Activated CD4-positive, alpha-beta T cell treated with anti-CD3 and anti-CD28 coated beads for 36 hours (primary cell): ENCODE measurements at regions of chr10 and their contacts with region 1.

Region 1: DNA sequence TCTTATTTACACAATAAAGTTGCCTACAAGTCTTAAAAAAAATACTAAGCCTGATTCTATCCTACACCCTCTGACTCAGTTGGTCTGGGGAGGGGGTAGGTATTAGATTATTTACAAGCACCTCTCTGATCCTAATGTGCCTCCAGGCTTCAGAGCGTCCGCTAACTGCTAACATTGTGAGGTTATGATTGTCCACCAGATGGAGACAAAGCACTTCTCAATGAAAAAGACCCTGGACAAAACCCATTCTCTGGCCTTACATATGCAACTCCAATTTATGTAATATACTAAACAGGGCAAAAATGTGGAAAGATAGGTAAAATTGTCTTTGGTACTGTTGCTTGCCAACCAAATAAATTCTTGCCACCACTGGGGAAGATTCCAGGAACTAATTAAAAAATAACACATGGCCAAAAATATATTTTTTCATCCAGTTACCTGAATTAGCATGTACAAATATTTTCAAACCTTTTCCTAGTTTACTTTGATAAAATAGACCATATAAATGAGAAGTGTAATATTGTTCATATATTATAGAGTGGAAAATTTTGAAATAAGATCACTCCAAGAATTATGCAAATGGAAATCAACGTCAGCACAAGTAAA is 92.4 kb downstream of the KIF20B start:
- DNase-seq: peak; percentile 46
- ATAC-seq: peak; percentile 65
- H3K4me3 Mint-ChIP-seq: no peak overlapping the region
- H3K27ac Mint-ChIP-seq: no peak overlapping the region
- H3K4me1 Mint-ChIP-seq: peaks cover 8% of the 10 kb centered on the region
- H3K27me3 Mint-ChIP-seq: peaks cover 22% of the 10 kb centered on the region

Region 2: GRCh38 chr10:89553064-89553734 is 240.6 kb before region 1 on chr10:
- CTCF ChIA-PET with region 1: no interaction called
- POLR2A ChIA-PET with region 1: no interaction called
- intact Hi-C with region 1: no loop called
- DNase-seq: no peak
- ATAC-seq: no peak
- H3K4me3 Mint-ChIP-seq: no peak overlapping the region
- H3K27ac Mint-ChIP-seq: no peak overlapping the region
- H3K4me1 Mint-ChIP-seq: no peaks in the 10 kb centered on the region
- H3K27me3 Mint-ChIP-seq: peaks cover 4% of the 10 kb centered on the region

Region 3: GRCh38 chr10:89954787-89955566 is 161.2 kb after region 1 on chr10:
- CTCF ChIA-PET with region 1: no interaction called
- POLR2A ChIA-PET with region 1: no interaction called
- intact Hi-C with region 1: loop called (anchors 2 to 10 kb)
- DNase-seq: peak; percentile 6
- ATAC-seq: peak; percentile 47
- H3K4me3 Mint-ChIP-seq: no peak overlapping the region
- H3K27ac Mint-ChIP-seq: no peak overlapping the region
- H3K4me1 Mint-ChIP-seq: peaks cover 2% of the 10 kb centered on the region
- H3K27me3 Mint-ChIP-seq: peaks cover 5% of the 10 kb centered on the region

Region 4: DNA sequence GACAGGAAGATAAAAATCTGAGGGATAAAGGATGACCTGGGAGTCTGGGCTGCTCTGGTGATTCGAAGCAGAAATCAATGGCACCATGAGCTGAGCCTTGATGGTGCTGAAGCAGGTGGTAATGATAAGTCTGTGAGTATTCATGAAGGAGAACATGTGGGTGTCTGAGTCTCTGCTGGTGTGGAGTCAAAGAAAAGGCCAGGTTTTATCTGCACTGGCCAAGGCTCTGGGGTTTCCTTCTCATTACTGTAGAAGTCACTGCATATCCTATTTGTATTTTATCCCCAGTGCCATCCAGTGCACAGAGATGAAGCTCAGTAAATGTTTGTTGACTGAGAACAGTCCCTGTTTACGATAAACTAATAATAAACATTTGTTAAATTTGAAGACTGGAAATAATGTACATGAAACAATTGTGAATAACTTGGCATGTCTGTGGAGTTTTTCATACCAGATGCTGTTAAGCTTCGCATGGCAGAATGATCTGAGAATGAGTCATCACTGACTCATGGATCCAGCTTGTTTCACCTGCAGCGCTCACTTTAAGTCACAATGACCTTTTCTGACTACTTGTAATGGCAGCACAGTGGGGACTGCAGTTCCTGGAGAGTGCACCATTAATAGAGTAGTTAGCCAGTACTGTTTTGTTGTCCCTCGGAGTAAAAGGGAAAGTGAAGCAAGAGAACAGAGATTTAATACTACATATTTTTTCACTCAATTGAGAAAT is 525.6 kb after region 1 on chr10:
- CTCF ChIA-PET with region 1: no interaction called
- POLR2A ChIA-PET with region 1: no interaction called
- intact Hi-C with region 1: loop called in 1 of 2 experiments (anchors 10 kb)
- DNase-seq: peak; percentile 30
- ATAC-seq: peak; percentile 97
- H3K4me3 Mint-ChIP-seq: no peak overlapping the region
- H3K27ac Mint-ChIP-seq: no peak overlapping the region
- H3K4me1 Mint-ChIP-seq: peaks cover 8% of the 10 kb centered on the region
- H3K27me3 Mint-ChIP-seq: peaks cover 15% of the 10 kb centered on the region

Region 5: DNA sequence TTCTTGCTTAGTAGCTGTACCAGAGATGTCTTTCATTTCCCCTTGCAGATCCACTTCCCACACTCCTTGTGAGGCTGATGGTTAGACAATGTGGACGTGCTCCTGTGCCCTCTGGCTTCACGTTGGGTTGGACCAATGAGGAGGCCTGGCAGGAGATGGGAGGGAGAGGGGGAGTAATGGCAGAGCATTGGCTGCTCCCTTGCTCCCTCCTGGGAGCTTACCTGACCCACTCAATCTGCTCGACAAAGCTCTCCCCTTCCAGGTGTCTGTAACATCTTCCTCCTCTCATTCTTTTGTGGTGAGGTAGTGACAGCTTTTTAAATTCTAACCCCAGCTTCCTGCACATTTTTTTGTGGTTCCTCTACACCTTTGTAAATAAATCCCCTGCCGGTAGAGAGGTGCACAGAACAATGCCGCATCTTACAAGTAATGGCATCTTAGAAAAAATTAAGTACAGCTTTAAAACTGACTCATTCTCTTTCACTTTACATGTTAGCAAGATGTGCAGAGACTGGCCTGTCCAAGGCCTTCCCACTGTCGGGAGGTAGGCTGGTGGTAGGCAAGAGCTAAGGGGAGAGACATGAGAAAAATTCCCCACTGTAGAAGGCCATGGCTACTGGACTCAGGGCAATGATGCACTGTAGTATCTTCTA is 929.8 kb after region 1 on chr10:
- CTCF ChIA-PET with region 1: no interaction called
- POLR2A ChIA-PET with region 1: no interaction called
- intact Hi-C with region 1: loop called in 1 of 2 experiments (anchors 10 kb)
- DNase-seq: peak; percentile 11
- ATAC-seq: peak; percentile 60
- H3K4me3 Mint-ChIP-seq: no peak overlapping the region
- H3K27ac Mint-ChIP-seq: peak overlapping the region; percentile 23
- H3K4me1 Mint-ChIP-seq: peaks cover 10% of the 10 kb centered on the region
- H3K27me3 Mint-ChIP-seq: no peaks in the 10 kb centered on the region

Region 6: GRCh38 chr10:90862908-90863514 is 1069.3 kb after region 1 on chr10:
- CTCF ChIA-PET with region 1: no interaction called
- POLR2A ChIA-PET with region 1: no interaction called
- intact Hi-C with region 1: loop called (anchors 5 kb)
- DNase-seq: no peak
- ATAC-seq: no peak
- H3K4me3 Mint-ChIP-seq: no peak overlapping the region
- H3K27ac Mint-ChIP-seq: no peak overlapping the region
- H3K4me1 Mint-ChIP-seq: peaks cover 4% of the 10 kb centered on the region
- H3K27me3 Mint-ChIP-seq: peaks cover 38% of the 10 kb centered on the region